Vagina (tissue), 2 donors: ENCODE measurements at regions of chr1 and their contacts with region 1.

Region 1: DNA sequence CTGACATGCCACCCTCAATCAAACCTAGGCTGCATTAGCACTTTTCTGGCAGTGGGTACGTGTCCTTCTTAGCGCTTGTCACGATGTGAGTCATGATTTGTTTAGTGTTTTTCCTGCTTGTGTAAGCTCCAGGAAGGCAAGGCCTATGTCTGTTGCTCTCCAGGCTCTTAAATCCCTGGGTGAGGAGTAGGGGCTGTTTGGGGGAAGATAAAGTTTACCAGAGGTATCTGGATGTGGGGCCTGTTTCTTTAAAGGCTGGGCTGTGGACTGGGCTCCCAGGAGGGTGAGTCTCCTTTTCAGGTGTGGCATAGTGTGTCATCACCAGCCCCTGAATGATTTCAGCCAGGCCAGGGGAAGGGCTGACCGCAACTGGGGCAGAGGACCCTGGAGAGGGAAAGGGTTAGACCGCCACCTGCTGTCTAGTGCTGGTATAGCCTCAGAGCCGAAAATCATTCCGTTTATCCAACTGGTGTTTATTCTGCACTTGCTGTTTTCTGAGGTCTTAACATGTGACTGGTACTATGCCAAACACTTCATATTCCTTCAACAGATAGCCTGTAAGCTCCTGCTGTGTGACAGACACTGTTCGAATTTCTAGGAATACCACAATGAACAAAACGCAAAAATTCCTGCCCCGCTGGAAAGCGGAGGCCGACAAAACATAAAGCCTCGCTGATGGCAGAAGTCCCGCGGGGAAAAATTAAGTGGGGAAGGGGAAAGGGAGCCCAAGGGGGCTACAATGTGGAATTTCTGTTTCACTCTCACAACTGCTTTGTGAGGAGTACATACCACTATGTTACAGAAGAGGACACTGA is 9.7 kb downstream of the SERINC2 start:
- DNase-seq: no peak
- H3K4me3 ChIP-seq: no peak overlapping the region
- H3K27ac ChIP-seq: no peak overlapping the region
- H3K4me1 ChIP-seq: no peaks in the 10 kb centered on the region
- H3K27me3 ChIP-seq: no peaks in the 10 kb centered on the region
- CTCF ChIP-seq: peak; percentile 82 to 94 (median 88)
- POLR2A ChIP-seq: no peak

Region 2: DNA sequence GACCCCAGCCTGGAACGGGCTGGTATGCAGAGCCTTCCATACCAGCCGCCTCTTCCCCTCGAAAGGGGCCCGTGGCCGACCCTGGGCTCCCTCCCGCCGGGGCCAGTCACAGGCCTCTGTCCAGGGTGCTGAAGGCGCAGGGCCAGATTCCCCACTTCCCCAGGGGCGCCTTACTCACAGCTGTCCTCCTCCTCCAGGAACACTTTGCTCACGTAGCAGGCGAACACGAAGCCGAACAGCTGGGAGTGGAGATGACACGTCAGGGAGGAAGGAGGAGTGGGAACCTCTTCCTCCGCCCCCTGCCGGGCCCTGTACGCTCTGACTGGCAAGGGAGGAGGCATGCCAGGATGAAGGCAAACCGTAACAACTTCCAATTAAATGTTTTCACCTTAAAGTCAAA is 240.4 kb before region 1 on chr1:
- intact Hi-C with region 1: loop called (anchors 10 kb)
- DNase-seq: no peak
- H3K4me3 ChIP-seq: peak overlapping the region in 1 of 2 donors; percentile 18
- H3K27ac ChIP-seq: no peak overlapping the region
- H3K4me1 ChIP-seq: peaks cover 11% of the 10 kb centered on the region
- H3K27me3 ChIP-seq: no peaks in the 10 kb centered on the region
- CTCF ChIP-seq: no peak
- POLR2A ChIP-seq: no peak